Right ventricle myocardium inferior (tissue), 1 donor: ENCODE measurements at regions of chr7 and their contacts with region 1.

Region 1: DNA sequence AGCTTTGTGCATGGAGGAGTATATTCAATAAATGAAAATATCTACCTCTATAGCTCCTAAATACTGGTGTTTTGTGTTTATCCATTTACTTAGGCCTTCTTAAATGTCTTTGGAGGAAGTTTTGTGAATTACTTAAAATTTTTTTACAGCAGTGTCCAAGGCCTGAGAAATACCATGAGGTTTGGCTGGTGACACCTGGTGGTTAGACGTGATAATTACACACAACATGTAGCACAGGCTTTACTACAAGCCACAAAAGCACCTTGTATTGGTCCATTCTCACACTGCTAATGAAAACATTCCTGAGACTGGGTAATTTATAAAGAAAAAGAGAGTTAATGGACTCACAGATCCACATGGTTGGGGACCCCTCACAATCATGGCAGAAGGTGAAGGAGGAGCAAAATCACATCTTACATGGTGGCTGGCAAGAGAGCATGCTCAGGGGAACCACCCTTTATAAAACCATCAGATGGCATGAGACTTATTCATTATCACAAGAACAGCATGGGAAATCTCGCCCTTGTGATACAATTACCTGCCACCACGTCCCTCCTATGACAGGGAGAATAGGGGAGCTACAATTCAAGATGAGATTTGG is 20.6 kb downstream of the HYAL4 start:
- DNase-seq: no peak
- ATAC-seq: peak; percentile 67

Region 2: DNA sequence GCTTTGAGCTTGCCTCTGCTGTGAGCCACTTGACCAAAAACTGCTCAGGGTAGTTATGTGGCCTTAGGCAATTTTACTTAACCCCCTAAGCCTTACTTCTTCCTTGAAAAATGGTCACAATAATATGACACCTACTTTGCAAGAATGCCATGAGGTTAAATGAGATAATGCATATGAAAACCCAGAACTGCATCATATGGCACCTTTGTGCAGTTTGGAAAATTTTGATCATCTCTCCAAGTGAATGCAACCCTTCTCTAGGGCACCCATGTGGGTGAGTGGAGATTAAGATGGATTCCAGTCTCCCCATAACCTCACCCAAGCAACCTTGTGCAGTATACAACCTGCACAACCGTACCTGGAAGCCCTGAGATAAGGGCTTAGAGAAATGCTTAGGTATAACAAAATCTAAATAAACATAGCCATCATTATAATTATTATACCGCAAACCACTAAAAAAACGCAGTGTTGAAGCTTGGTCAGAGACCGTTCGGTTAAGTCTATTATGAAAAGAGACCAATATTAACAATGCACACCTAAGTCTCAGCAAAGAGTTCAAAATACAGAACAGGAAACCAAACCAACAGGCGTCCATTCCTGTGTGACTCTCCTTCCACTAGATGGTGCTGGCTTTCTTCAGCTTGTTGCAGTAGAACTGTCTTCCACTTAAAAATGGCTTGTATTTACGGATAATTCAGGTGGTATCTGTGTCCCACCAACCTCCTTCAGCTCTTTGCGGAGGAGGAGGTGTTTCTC is 285.0 kb before region 1 on chr7:
- intact Hi-C with region 1: loop called (anchors 5 kb)
- DNase-seq: no peak
- ATAC-seq: peak; percentile 65

Region 3: DNA sequence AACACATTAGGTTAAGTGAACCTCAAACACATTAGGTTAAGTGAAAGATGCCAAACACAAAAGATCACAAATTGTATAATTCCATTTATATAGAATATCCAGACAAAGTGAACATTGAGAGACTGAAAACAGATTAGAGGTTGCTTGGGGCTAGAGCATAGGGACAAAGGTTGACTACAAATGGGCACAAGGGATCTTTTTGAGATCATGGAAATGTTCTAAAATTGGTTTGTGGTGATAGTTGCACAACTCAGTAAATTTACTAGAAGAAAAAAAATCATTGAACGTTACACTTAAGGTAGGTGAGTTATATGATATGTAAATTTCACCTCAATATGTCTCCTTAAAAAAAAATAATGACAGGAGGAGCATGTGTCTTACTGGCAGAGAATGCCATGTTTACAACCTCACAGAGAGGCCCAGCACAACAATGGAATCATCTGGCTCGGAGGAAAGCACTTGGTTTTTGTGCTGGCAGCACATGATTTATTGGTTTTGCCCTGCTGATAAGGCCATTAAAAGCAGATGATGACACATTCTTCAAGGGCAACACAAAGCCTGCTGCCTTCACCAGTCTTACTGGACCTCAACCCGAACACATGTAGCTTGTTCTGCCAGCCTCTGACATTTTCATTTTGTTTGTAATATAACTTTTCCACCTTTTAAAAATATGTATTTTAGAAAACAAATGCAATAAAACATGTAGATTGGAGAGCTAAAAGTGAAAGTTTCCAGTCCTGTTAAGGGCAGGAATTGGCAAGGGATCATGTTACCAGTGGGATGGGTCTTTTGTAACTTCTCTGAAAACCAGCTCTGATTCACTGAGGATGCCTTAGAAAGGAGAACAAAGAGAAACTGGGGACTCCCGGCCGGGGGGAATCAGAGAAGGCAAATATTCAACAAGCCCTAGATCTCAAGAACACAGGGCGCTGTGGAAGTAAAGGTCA is 221.8 kb before region 1 on chr7:
- intact Hi-C with region 1: loop called (anchors 5 kb)
- DNase-seq: no peak
- ATAC-seq: peak; percentile 51

Region 4: GRCh38 chr7:123682690-123683089 is 182.9 kb before region 1 on chr7:
- intact Hi-C with region 1: loop called (anchors 2 kb)
- DNase-seq: no peak
- ATAC-seq: peak; percentile 45

Region 5: GRCh38 chr7:123749537-123749857 is 116.1 kb before region 1 on chr7:
- intact Hi-C with region 1: no loop called
- DNase-seq: no peak
- ATAC-seq: peak; percentile 14

Region 6: DNA sequence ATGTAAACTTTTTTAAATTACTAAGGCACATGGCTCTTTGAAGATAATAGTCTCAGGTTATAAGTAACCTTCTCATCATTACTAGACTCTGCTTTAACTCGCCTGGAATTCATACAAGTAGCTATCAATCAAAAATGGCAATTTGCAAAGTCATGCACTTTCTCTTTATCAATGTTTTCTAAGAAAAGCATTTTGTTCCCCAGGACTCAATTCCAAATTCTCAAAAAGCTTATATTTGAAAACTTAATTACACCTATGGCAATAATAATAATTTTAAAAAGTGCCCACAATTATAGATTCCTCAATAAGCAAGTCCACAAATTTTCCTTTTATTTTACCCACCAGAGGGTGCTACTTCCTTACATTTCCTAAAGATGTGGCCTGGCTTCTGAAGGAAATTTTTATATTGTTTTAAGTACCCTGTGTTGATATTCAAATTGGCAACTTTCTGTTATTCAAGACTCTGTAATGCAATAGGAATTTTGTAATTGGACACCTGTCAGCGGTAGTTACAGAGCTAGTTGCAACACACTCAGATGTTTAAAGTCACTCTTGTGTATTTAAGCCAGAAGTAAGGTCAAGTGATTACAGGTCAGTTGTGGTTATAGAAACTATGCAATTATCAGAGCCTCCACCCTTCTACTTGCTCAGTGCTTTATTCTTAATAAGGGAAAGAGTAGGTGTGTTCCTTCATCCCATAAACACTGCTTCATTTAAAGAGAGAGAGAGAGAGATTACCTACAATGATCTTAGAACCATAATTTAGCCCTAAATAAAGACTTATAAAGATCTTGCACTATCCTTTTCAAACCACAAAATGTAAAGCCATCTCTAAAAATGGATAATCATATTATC is 67.7 kb before region 1 on chr7:
- intact Hi-C with region 1: loop called (anchors 2 kb)
- DNase-seq: no peak
- ATAC-seq: no peak